ENCODE measurements at regions of chr9 and their contacts with region 1.

Region 1: GRCh38 chr9:27033823-27034403 is 28.4 kb upstream of the LRRC19 start:
- DNase-seq: peak; percentile 66
- H3K4me3 ChIP-seq: no peak overlapping the region
- H3K27ac ChIP-seq: no peak overlapping the region
- H3K4me1 ChIP-seq: no peaks in the 10 kb centered on the region
- H3K27me3 ChIP-seq: no peaks in the 10 kb centered on the region
- CTCF ChIP-seq: peak; percentile 68 to 87 (median 80)
- EP300 ChIP-seq: no peak
- POLR2A ChIP-seq: no peak

Region 2: DNA sequence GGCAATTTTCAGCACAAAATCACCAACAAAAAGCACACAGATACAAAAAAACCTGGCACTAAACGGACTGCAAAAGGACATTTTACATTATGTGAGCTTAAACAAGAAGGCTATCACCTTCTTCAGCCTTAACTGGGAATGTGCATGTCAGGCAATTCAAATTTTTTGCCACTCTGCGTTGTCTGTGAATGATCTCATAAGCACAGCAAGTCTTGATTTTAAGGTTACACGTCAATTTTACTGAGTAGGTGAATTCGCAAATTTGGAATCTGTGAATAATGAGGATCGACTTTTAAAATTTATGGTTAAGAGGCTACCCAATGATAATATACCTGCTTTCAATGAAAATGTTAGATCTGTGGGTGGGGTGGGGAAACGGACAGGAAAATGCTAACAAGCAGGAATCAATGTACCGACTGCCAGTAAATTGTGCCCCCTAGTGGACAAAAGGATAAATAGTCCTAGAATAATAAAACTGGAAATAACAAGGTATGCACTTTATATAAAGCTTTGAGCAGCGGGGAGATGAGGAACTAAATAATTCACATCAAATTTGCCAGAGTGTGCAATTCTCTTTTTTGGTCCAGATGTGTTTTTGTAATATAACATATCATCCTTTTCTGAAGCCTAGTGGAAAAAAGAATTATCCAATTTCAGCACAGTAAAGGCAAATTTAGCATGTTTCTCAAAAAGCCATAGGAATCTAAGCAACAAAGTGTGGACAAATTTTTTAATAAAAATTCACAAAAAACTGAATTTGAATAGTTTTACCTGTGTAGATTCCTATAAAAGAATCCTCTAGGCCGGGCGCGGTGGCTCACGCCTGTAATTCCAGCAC is 242.5 kb after region 1 on chr9:
- in situ Hi-C with region 1: loop called (anchors 5 to 10 kb)
- intact Hi-C with region 1: loop called (anchors 5 kb)
- DNase-seq: no peak
- H3K4me3 ChIP-seq: peak overlapping the region in 1 of 4 donors; percentile 11
- H3K27ac ChIP-seq: no peak overlapping the region
- H3K4me1 ChIP-seq: peaks cover 0 to 9% (median 3%) of the 10 kb centered on the region in 4 donors
- H3K27me3 ChIP-seq: no peaks in the 10 kb centered on the region
- CTCF ChIP-seq: peak; percentile 74 to 85 (median 80)
- EP300 ChIP-seq: no peak
- POLR2A ChIP-seq: no peak

Region 3: DNA sequence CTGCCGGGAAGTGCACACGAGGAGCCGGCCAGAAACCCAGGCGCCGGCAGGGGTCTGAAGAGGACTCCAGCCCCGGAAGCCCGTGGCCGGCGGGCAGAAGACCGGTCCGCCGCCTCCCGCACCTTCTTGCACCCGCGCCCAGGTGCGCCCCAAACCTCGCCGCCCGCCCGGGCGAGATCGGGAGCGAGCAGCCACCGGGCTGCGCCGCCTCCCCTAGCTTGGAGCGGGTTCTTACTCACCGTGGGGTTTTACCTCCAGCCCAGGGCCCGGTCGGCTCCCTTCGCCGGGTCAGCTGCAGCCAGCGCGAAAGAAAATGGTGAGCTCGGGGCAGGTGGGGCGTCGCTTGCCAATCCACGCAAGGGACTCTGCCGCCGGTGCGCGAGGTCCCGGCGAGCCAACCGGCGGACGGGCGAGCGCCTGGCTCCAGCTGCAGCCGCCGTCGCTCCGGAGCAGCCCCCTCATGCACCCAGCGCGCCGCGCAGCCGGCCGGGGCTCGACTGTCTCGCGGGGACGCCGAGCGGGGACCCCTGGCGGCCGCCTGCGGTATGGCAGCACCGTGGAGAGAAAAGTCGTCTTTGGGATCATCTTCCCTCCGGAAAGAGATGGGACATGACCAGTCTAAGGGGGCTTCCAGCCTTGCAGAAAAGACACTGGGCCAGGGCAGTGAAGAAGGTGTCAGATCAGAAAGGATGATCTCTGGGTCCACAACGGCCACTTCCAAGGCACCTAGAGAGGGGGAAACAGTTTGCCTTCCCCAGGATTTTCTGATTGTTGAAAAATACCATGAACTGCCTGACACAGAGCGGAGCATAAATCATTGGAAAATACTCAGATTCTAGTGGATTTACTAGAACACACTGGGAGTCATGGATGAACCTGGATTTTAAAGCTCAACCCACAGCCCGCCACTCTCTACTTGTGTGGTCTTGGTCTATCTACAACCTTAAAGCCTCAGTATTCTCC is 495.7 kb after region 1 on chr9 and contains the start of gene MOB3B:
- in situ Hi-C with region 1: loop called in 1 of 4 experiments (anchors 25 kb)
- intact Hi-C with region 1: no loop called
- DNase-seq: peak; percentile 88
- H3K4me3 ChIP-seq: peak within 1 kb of the TSS; percentile 57 to 90 (median 79)
- H3K27ac ChIP-seq: peak within 1 kb of the TSS; percentile 95 to 97 (median 95)
- H3K4me1 ChIP-seq: peaks cover 13 to 59% (median 23%) of the 10 kb centered on the region in 4 donors
- H3K27me3 ChIP-seq: no peaks in the 10 kb centered on the region
- CTCF ChIP-seq: peak; percentile 84 to 98 (median 92)
- EP300 ChIP-seq: no peak
- POLR2A ChIP-seq: no peak
- total RNA-seq, gene MOB3B: 18.3 to 39.7 (median 29.1) TPM

Region 4: DNA sequence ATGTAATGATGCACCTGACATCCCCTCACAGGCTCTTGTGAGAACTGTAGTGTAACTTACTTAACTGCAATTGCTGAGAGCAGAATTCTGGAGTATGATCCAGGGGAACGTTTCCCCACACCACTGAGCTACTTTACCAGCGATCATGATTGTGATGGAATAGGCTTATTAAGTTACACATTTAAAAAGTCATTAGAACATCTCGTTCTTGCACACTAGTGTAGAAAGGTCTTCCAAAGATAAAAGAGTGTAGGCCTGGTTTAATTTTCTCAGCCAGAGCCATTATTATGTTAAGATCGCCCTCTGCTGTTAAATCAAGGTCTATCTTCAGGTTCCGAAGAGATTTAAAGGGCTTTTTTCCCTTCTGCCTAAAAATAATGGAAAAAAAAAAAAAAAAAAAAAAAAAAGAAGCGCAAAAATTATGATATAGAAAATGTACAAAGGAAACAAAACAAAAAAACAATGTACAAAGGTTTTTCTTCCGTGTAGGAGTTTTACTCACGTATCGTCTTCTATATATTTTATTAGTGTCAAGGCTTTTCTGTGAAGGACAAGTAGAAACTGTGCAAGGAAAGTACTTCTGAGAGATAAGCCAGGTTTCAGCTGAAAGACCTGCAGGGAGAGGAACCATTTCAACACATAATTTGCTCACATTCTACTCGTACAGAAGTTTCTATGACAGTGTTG is 514.3 kb after region 1 on chr9:
- in situ Hi-C with region 1: loop called in 2 of 4 experiments (anchors 25 kb)
- intact Hi-C with region 1: loop called (anchors 10 kb)
- DNase-seq: no peak
- H3K4me3 ChIP-seq: no peak overlapping the region
- H3K27ac ChIP-seq: no peak overlapping the region
- H3K4me1 ChIP-seq: peaks cover 0 to 15% (median 0%) of the 10 kb centered on the region in 4 donors
- H3K27me3 ChIP-seq: no peaks in the 10 kb centered on the region
- CTCF ChIP-seq: peak; percentile 40 to 58 (median 48)
- EP300 ChIP-seq: no peak
- POLR2A ChIP-seq: no peak

Region 5: DNA sequence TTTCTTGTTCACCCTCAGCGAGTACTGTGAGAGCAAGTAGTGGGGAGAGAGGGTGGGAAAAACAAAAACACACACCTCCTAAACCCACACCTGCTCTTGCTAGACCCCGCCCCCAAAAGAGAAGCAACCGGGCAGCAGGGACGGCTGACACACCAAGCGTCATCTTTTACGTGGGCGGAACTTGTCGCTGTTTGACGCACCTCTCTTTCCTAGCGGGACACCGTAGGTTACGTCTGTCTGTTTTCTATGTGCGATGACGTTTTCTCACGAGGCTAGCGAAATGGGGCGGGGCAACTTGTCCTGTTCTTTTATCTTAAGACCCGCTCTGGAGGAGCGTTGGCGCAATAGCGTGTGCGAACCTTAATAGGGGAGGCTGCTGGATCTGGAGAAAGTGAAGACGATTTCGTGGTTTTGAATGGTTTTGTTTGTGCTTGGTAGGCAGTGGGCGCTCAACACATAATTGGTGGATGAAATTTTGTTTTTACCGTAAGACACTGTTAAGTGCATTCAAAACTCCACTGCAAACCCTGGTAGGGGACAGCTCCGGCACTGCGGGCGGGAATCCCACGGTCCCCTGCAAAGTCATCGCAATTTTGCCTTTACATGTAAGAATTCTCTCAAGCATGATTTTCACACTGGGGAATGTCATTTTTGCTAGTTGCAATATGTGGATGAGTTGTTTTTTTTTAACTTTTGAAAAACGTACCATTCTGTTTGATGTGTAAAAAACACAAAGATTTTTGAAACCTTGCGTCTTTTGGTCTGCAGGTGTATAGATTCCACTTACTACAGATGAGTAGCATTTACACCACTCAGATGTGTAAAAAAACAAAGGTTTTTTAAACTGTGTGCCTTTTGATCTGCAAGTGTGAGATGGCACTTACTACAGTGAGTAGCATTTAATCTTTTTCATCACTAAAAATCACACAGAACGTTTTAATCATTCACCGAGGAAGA is 540.0 kb after region 1 on chr9:
- in situ Hi-C with region 1: loop called in 1 of 4 experiments (anchors 25 kb)
- intact Hi-C with region 1: no loop called
- DNase-seq: peak; percentile 98
- H3K4me3 ChIP-seq: peak overlapping the region; percentile 26 to 94 (median 64)
- H3K27ac ChIP-seq: peak overlapping the region; percentile 95 to 99 (median 98)
- H3K4me1 ChIP-seq: peaks cover 7 to 31% (median 9%) of the 10 kb centered on the region in 4 donors
- H3K27me3 ChIP-seq: no peaks in the 10 kb centered on the region
- CTCF ChIP-seq: peak in 2 of 5 experiments; percentile 7 to 15
- EP300 ChIP-seq: peak; percentile 97
- POLR2A ChIP-seq: peak; percentile 87